Sciatic nerve (tissue), 2 donors: ENCODE measurements at regions of chr3 and their contacts with region 1.

Region 1: DNA sequence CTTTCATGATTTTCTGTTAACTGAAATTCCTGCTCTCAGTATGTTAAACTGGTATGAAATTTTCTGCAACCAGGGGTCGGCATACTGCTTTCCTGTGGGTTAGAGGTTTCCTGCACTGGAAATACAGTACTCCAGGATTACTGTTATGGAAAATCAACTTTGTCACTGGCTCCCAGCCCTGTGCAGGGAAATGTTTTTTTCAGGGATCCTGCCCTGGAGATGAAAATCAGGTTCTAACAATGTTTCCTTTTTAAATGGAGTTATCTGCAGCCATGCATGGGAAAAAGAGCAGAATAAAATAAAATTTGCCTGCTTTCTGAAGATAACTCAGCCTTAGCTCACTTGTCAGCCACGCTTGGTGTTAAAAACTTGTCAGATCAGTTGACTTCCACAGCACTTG is 220.4 kb downstream of the IL5RA start:
- DNase-seq: no peak
- ATAC-seq: no peak

Region 2: GRCh38 chr3:2944628-2945027 is 54.9 kb after region 1 on chr3:
- intact Hi-C with region 1: no loop called
- DNase-seq: no peak
- ATAC-seq: no peak

Region 3: GRCh38 chr3:4575381-4575780 is 1685.6 kb after region 1 on chr3:
- intact Hi-C with region 1: loop called (anchors 5 kb)
- DNase-seq: no peak
- ATAC-seq: peak; percentile 90